ENCODE measurements at regions of chr2 and their contacts with region 1.

Region 1: GRCh38 chr2:48313036-48313877 is 216.7 kb upstream of the STON1 start:
- DNase-seq: peak; percentile 49
- ATAC-seq: peak; percentile 5
- H3K4me3 ChIP-seq: peak overlapping the region; percentile 69
- H3K27ac ChIP-seq: peak overlapping the region; percentile 98
- H3K4me1 ChIP-seq: no peaks in the 10 kb centered on the region; the same call in 1 of the 2 replicates
- H3K27me3 ChIP-seq: no peaks in the 10 kb centered on the region
- CTCF ChIP-seq: no peak
- EP300 ChIP-seq: no peak
- POLR2A ChIP-seq: no peak
- RAD21 ChIP-seq: no peak

Region 2: DNA sequence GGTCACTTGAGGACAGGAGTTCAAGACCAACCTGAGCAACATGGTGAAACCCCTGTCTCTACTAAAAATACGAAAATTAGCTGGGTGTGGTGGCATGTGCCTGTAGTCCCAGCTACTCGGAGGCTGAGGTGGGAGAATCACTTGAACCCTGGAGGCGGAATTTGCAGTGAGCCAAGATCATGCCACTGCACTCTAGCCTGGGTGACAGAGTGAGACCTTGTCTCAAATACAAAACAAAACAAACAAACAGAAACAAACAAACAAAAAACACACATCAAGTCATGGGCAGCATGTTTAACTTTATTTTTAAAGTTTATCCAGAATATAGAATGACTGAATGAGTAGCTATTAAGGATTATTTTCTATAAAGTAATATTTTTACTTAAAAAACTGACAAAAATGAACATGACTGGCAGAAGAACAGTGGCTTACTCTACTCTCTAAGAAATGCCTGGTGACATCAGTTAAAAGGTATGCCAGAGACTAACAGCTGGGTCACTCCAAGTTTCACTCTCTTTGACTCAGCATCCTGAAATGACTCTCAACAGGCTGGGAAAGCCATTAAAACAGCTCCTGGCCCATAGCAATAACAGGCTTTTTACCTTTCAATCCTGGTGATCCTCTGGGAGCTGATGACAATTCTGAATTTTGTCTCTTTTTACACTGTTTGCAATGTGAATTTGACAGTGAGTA is 64.9 kb before region 1 on chr2:
- CTCF ChIA-PET with region 1: no interaction called
- POLR2A ChIA-PET with region 1: no interaction called
- RAD21 ChIA-PET with region 1: no interaction called
- SMC1A ChIA-PET with region 1: no interaction called
- in situ Hi-C with region 1: no loop called
- intact Hi-C with region 1: no loop called
- DNase-seq: peak; percentile 48
- ATAC-seq: peak; percentile 89
- H3K4me3 ChIP-seq: no peak overlapping the region
- H3K27ac ChIP-seq: peak overlapping the region; percentile 40; the same call in 1 of the 2 replicates
- H3K4me1 ChIP-seq: peaks cover 19% of the 10 kb centered on the region
- H3K27me3 ChIP-seq: no peaks in the 10 kb centered on the region
- CTCF ChIP-seq: no peak
- EP300 ChIP-seq: 0 out of 4 replicates have a peak, but pooled peaks of 1 of the 2 experiments have one; percentile 11
- POLR2A ChIP-seq: no peak
- RAD21 ChIP-seq: no peak

Region 3: DNA sequence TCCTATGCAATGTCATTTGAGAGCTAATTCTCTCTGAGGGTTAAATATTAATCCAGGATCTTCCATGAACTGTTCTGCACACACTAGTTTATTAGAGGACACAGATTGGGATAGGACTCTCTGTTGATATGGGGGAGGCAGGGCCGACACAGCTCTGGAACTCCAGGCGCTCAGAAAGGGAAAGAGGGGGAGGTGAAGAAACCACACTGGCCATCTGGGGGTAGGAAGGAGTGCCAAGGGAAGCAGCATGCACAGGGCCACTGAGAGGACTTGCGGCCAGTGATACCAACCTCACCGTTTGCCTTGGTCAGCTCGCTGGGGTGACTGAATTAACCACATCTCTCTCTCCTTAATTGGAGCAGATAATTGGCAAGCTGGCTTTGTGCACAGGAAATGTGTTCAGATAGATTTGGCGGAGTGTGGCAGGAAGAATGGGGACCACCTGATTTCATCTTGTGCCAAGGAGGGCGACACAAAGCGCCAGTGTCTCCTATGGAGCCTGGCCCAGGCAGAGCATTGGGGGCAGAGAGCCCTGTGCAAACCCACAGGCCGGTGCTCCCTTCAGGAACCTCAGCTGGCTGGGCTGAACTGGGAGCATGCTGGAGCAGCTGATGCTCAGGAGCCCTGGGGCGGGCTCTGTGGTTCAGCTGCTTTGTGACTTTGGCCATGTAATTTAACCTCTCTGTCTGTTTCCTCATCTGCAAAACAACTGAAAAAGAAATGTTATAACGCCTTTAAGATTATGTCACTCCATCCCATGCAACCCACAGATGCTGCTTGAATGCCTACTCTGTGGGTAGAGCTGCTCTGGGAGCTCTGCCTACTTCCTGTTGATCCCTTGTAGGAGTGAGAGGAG is 102.0 kb after region 1 on chr2:
- CTCF ChIA-PET with region 1: interaction called, 5 read pairs
- POLR2A ChIA-PET with region 1: no interaction called
- RAD21 ChIA-PET with region 1: interaction called, 6 read pairs
- SMC1A ChIA-PET with region 1: interaction called, 15 read pairs
- in situ Hi-C with region 1: no loop called
- intact Hi-C with region 1: no loop called
- DNase-seq: no peak
- ATAC-seq: peak; percentile 55
- H3K4me3 ChIP-seq: no peak overlapping the region
- H3K27ac ChIP-seq: no peak overlapping the region
- H3K4me1 ChIP-seq: peaks cover 17% of the 10 kb centered on the region
- H3K27me3 ChIP-seq: no peaks in the 10 kb centered on the region
- CTCF ChIP-seq: no peak
- EP300 ChIP-seq: no peak
- POLR2A ChIP-seq: no peak
- RAD21 ChIP-seq: no peak

Region 4: DNA sequence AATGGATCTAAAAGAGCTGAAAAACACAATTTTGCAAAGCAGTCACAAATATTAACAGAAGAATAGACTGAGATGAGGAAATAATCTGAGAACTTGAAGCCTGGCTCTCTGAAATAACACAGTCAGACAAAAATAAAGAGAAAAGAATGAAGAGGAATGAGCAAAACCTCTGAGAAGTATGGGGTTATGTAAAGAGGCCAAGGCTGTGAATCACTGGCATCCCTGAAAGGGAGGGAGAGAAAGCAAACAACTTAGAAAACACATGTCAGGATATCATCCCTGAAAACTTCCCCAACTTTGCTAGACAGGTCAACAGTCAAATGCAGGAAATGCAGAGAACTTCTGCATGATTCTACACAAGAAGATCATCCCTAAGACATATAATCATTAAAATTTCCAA is 515.8 kb after region 1 on chr2:
- CTCF ChIA-PET with region 1: no interaction called
- POLR2A ChIA-PET with region 1: no interaction called
- RAD21 ChIA-PET with region 1: no interaction called
- SMC1A ChIA-PET with region 1: no interaction called
- in situ Hi-C with region 1: no loop called
- intact Hi-C with region 1: no loop called
- DNase-seq: no peak
- ATAC-seq: no peak
- H3K4me3 ChIP-seq: no peak overlapping the region
- H3K27ac ChIP-seq: no peak overlapping the region
- H3K4me1 ChIP-seq: no peaks in the 10 kb centered on the region
- H3K27me3 ChIP-seq: 0 out of 4 replicates have a peak, but pooled peaks cover 0 to 1% of the 10 kb centered on the region in 2 experiments
- CTCF ChIP-seq: no peak
- EP300 ChIP-seq: no peak
- POLR2A ChIP-seq: no peak
- RAD21 ChIP-seq: no peak